Common myeloid progenitor, CD34-positive (primary cell): ENCODE measurements at regions of chr17 and their contacts with region 1.

Region 1: DNA sequence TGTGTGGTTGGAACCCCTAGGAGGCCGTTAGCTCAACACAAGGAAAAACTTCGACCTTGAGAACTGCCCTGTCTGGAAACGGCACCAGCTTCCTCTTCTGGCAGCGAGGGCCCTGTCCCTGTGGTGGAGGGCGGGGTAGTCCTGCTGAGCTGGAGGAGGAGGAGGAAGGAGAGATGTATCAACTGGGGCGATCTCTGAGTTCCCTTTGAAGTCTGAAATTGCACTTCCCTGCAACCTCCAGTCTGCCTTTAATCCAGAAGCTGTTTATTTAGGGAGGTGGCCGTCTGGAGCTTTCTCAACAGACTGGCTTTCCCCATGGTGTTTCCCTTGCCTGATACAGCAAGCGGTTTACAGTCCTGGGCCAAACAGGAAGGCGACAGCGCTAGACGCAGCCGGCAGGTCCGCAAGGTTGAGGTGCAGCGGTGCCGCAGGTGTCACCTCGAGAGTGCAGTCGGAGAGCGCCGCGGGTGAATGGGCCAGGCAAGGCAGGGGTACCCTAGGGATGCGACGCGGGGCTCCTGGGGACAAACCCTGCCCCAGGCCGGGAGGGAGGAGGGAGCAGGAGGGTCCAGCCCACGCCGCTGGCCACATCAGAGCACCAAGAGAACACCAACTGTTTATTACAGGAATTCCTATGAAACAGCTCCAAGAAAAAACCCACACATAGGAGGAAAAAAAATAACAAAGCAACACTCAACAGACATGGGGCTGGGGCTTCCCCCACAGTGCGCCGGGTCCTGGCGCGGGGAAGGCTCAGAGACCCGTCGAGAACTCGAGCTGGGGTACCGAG is 11.4 kb upstream of the MRPS23 start:
- DNase-seq: peak; percentile 56 to 88 (median 85)
- H3K4me3 ChIP-seq: peak overlapping the region in 6 of 7 experiments; percentile 33 to 78 (median 52)
- H3K27ac ChIP-seq: no peak overlapping the region
- H3K4me1 ChIP-seq: peaks cover 3 to 44% (median 37%) of the 10 kb centered on the region in 4 experiments
- H3K27me3 ChIP-seq: peaks cover 0 to 8% (median 4%) of the 10 kb centered on the region in 5 experiments

Region 2: DNA sequence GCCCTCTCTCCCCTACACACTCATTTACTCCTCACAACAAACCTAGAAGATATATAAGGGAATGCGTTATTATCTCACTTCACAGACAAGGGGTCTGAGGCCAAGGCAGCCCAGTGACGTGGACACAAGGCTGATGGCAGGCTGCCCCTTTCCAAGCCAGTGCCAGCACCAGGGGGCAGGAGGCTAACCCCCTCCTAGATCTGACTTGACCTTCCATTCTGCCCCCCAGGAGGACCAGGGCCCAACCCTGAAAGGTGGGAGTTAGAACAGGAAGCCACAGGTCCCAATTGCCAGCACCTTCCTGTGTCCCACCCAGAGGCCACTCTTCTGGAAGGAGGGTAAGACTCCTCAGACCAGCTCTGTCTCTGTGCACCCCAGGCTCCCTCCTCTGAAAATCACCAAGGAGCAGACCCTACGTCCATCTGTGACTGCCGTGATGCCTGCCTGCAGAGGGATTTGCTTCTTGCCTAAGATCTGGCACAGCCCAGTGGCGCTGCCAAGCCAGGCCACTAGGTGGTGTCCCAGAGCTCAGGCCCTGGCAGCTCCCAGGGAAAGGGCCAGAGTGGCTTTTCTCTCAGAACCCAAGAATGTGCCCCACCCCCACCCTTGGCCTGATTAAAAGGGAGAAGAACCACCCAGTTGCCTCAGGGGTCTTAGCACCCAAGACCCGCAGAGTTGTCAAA is 31.1 kb after region 1 on chr17:
- CTCF ChIA-PET with region 1: interaction called, 12 read pairs
- POLR2A ChIA-PET with region 1: interaction called, 4 read pairs
- DNase-seq: peak; percentile 72 to 83 (median 77)
- H3K4me3 ChIP-seq: peak overlapping the region in 2 of 7 experiments; percentile 31 to 52
- H3K27ac ChIP-seq: peak overlapping the region in 1 of 2 experiments; percentile 69
- H3K4me1 ChIP-seq: peaks cover 0 to 54% (median 43%) of the 10 kb centered on the region in 4 experiments
- H3K27me3 ChIP-seq: no peaks in the 10 kb centered on the region

Region 3: DNA sequence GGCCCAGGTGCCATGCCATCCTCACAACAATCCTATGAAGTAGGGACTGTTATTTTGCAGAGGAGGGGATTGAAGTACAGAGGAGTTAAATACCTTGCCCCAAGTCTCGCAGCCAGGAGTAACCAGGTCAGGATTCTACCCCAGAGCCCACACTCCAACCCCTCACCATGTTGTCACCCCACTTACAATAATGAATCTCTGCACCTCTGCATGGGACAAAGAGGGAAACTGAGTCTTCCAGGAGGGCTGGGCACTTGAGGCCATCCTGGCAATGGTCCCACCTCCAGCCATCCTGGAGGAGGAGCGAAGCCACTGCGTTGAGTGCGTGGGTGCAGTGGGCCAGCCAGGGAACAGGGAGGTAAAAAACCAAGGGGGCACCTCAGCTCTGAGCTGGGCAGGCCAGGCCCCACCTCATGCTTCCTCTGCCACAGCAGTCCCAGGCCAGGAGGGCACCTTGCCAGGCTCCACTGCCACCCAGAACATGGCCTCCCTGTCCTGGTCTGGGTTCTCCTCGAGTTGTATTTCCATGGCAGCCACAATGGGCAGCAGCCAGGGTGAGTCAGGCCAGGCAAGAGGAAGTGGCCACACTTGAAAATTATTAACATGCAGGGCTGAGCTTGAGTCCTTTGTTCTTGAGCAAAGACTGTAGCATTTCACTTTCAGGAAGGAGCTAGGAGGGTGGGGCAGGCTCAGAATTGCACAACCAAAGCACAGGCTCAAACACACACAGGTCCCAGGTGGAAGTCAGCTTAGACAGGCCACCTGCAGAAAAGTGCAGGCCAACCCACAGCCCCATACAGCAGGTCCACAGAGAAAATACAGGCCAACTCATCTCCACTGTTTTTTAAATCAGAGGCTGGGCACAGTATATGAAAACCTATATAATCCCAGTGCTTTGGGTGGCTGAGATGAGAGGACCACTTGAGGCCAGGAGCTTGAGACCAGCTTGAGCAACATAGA is 41.9 kb after region 1 on chr17:
- CTCF ChIA-PET with region 1: interaction called, 16 read pairs
- POLR2A ChIA-PET with region 1: no interaction called
- DNase-seq: peak in 2 of 3 donors; percentile 69 to 74
- H3K4me3 ChIP-seq: peak overlapping the region in 4 of 7 experiments; percentile 13 to 30 (median 20)
- H3K27ac ChIP-seq: no peak overlapping the region
- H3K4me1 ChIP-seq: peaks cover 17 to 82% (median 67%) of the 10 kb centered on the region in 4 experiments
- H3K27me3 ChIP-seq: no peaks in the 10 kb centered on the region

Region 4: DNA sequence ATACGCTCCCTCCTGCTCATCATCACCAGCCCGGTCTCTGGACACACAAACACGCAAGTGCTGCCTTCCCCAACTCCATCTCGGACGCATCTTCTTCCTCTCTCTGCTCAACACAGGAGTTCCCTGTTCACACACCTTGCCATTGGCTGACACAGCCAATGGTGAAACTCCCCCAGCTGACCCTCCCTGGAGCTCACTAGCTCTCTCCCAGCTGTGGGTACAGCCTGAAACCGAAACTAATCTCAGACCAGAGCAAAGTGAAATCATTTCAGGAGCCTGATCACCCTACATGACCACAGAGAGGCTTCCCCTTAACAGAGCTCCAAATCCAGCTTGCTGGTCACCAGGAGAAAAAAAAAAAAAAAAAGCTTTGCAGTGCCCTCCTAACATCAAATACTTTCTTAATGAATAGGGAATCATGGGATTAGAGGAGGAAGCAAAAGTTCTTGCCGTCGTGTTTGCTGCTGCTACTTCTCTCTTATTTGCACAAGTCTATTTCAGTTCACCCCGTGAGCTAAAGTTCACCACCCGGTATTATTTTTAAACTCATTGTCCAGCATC is 85.7 kb after region 1 on chr17:
- CTCF ChIA-PET with region 1: interaction called, 35 read pairs
- POLR2A ChIA-PET with region 1: no interaction called
- DNase-seq: peak; percentile 77 to 94 (median 94)
- H3K4me3 ChIP-seq: peak overlapping the region; percentile 28 to 79 (median 60)
- H3K27ac ChIP-seq: no peak overlapping the region
- H3K4me1 ChIP-seq: peaks cover 29 to 59% (median 50%) of the 10 kb centered on the region in 4 experiments
- H3K27me3 ChIP-seq: no peaks in the 10 kb centered on the region

Region 5: GRCh38 chr17:57955183-57955931 is 94.2 kb after region 1 on chr17 and contains the start of gene CUEDC1:
- CTCF ChIA-PET with region 1: interaction called, 10 read pairs
- POLR2A ChIA-PET with region 1: no interaction called
- DNase-seq: peak; percentile 29 to 63 (median 58)
- H3K4me3 ChIP-seq: peak within 1 kb of the TSS in 6 of 7 experiments; percentile 23 to 76 (median 58)
- H3K27ac ChIP-seq: no peak within 1 kb of the TSS
- H3K4me1 ChIP-seq: peaks cover 10 to 38% (median 29%) of the 10 kb centered on the region in 4 experiments
- H3K27me3 ChIP-seq: peaks cover 0 to 35% (median 10%) of the 10 kb centered on the region in 5 experiments

Region 6: DNA sequence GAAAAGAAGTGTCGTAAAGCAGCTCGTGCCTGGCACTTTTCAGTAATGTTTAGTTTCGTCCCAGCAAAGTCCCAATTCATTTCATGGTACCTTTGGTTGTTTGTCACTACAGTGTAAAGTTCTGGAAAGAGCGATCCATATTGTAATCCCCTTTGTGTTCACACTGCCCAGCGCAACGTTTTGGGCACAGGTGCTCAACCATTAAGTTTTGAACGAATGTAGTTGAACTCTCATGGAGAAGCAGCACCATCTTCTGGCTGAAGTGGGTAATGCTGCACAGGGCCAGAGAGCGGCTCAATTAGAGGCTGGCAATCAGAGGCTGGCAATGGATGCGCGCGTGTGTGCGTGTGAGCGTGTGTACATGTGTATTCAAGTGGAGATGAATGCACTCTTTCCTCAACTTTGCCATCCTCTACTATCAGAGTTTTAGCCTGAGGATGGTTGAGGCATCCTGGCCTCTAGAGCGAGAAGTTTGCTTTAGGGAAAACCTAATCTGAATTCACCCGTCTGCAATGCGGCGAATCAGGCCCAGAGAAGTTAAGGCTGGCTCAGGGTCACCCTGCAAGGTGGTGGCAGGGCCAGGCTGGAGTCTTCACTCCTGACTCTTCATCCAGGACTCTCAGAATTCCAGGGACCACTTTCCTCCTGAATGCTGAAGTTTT is 251.9 kb after region 1 on chr17:
- CTCF ChIA-PET with region 1: interaction called, 24 read pairs
- POLR2A ChIA-PET with region 1: no interaction called
- DNase-seq: peak; percentile 75 to 87 (median 81)
- H3K4me3 ChIP-seq: no peak overlapping the region
- H3K27ac ChIP-seq: no peak overlapping the region
- H3K4me1 ChIP-seq: no peaks in the 10 kb centered on the region
- H3K27me3 ChIP-seq: peaks cover 0 to 21% (median 0%) of the 10 kb centered on the region in 5 experiments